AG04450 (cell line): ENCODE measurements at regions of chr4 and their contacts with region 1.

Region 1: DNA sequence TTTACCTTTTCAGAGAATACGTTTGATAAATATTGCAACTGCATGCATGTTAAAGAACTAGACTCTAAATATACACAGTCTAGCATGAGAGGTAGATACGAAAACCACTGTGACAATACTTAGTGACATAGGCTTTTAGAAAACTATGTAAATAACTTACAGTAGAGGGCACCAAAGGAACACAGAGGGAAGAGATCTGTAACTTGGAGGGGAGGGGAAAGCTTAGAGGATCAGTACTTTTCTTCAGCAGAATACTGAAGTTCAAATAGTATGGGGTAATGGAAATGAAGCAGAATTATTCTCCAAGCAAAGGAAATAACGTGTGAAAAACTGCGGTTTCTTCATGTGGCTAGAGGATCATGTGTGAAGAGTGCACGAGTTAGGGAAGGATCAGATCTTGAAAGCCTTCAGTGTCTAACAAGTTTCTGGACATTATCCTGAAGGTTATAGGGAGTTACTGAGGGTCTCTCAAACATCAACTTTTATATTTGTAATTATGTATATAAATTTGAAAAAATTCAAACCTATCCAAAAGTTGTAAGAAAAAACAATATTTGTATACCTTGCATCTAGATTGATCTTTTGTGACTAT is 264.3 kb downstream of the NPFFR2 start:
- DNase-seq: peak; percentile 15
- H3K4me3 ChIP-seq: no peak overlapping the region
- H3K27ac ChIP-seq: no peak overlapping the region
- H3K27me3 ChIP-seq: no peaks in the 10 kb centered on the region
- CTCF ChIP-seq: peak; percentile 76

Region 2: DNA sequence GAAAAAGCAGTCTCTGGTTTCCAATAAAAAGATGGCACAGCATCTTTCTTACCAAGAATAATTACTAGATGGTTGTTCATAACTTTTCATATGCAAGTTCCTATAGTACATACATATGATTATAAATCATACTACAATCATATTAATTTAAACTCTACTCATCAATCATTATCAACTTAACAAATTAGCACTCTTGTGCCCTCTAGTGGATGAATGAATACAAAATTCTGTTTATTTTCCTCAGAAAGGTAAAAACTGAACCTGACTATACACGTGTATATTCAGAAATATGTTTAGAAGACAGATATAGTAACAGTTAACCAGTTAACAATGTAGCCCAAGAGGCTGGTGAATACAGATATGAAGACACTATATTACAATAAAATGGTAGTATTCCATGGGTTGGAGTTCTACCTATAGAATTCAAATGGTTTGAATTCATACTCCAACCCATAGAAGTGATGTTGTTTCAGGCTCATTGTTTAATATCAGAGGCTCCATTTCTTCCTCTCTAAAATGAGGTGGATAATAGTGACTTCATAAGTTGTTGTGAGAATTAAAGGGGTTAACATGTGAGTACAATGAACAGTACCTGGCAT is 172.9 kb after region 1 on chr4:
- CTCF ChIA-PET with region 1: interaction called, 21 read pairs
- POLR2A ChIA-PET with region 1: no interaction called
- DNase-seq: no peak
- H3K4me3 ChIP-seq: no peak overlapping the region
- H3K27ac ChIP-seq: no peak overlapping the region
- H3K27me3 ChIP-seq: no peaks in the 10 kb centered on the region
- CTCF ChIP-seq: peak; percentile 48

Region 3: DNA sequence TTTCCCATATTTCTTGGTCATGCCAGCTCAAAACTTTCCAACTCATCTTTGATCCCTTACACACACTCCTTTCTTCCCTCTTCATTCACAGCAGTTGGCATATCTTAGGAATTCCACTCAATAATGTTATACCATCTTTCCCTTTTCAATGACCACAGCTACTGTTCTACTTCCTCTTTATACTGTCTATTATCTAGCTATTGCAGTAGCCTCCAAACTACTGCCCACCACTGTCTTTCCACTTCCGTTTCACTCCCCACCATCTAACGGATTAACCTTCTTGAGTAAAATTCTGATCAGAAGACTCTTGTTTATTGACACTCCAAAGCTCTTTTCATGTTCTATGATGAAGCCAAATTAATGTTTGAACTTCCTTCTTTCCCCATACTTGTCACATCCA is 217.2 kb after region 1 on chr4:
- CTCF ChIA-PET with region 1: no interaction called
- POLR2A ChIA-PET with region 1: no interaction called
- DNase-seq: no peak
- H3K4me3 ChIP-seq: no peak overlapping the region
- H3K27ac ChIP-seq: no peak overlapping the region
- H3K27me3 ChIP-seq: no peaks in the 10 kb centered on the region
- CTCF ChIP-seq: no peak